Naive thymus-derived CD4-positive, alpha-beta T cell (primary cell): ENCODE measurements at regions of chr11 and their contacts with region 1.

Region 1: DNA sequence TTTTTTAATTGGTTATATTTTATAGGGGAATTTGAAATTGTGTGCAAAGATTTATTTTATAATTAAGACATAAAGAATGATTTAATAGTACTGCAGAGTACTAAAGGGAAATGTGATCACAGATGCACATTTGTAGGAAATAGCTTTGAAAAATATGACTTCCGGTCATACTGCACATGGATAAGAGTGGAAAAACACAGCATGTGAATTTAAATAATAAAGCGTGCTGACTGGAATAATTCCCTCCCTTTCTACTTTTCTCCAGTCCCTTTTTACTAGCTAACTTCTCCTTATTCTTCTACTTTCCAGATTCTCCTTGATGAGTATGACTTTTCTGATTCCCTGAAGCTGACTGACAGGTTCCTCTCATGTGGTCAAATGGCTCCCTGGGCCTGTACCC is 238.4 kb upstream of the CTSC start:
- DNase-seq: no peak
- ATAC-seq: no peak
- H3K4me3 ChIP-seq: no peak overlapping the region
- H3K4me3 Mint-ChIP-seq: no peak overlapping the region
- H3K27ac ChIP-seq: no peak overlapping the region
- H3K27ac Mint-ChIP-seq: no peak overlapping the region
- H3K4me1 ChIP-seq: no peaks in the 10 kb centered on the region
- H3K4me1 Mint-ChIP-seq: no peaks in the 10 kb centered on the region
- H3K27me3 ChIP-seq: no peaks in the 10 kb centered on the region
- H3K27me3 Mint-ChIP-seq: peaks cover 0 to 12% (median 7%) of the 10 kb centered on the region in 5 donors

Region 2: GRCh38 chr11:88103337-88104206 is 472.3 kb before region 1 on chr11:
- CTCF ChIA-PET with region 1: no interaction called
- POLR2A ChIA-PET with region 1: no interaction called
- intact Hi-C with region 1: no loop called
- DNase-seq: peak in 8 of 9 donors; percentile 9 to 46 (median 20)
- ATAC-seq: peak; percentile 78
- H3K4me3 ChIP-seq: no peak overlapping the region
- H3K4me3 Mint-ChIP-seq: no peak overlapping the region
- H3K27ac ChIP-seq: no peak overlapping the region
- H3K27ac Mint-ChIP-seq: no peak overlapping the region
- H3K4me1 ChIP-seq: no peaks in the 10 kb centered on the region
- H3K4me1 Mint-ChIP-seq: no peaks in the 10 kb centered on the region
- H3K27me3 ChIP-seq: peaks cover 0 to 5% of the 10 kb centered on the region in 2 donors
- H3K27me3 Mint-ChIP-seq: peaks cover 5 to 16% (median 8%) of the 10 kb centered on the region in 5 donors

Region 3: DNA sequence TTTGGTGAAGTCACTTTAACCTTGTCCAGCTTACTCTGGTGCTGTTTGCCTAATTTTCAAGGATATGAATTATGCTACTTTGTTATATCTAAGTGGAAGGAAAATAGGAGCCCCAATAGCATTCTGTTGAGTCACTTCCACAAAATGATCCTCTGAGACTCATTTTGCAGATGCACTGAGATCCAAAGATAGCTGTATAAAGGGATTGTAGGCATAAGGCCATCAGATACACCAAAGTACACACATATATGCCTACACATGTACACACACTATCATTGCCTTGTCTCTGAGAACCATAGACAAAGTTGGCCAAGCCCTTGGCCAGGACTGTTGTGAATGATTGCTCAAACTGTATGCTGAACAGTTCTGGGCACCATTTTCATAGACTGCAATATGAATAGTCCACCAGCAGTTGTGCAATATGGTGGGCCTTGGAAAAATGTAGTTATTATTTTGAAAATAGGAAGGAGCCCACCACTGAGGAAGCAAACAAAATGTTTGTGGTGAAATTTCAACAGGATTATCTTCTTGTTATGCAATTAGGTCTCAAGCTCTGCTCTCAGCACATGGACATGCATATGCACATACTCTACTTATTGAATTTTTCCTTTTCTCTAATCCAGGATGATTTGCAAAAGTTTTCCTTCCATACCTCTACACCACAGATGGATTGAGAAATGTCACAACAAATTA is 52.4 kb before region 1 on chr11:
- CTCF ChIA-PET with region 1: no interaction called
- POLR2A ChIA-PET with region 1: no interaction called
- intact Hi-C with region 1: no loop called
- DNase-seq: no peak
- ATAC-seq: no peak
- H3K4me3 ChIP-seq: no peak overlapping the region
- H3K4me3 Mint-ChIP-seq: no peak overlapping the region
- H3K27ac ChIP-seq: no peak overlapping the region
- H3K27ac Mint-ChIP-seq: no peak overlapping the region
- H3K4me1 ChIP-seq: no peaks in the 10 kb centered on the region
- H3K4me1 Mint-ChIP-seq: no peaks in the 10 kb centered on the region
- H3K27me3 ChIP-seq: no peaks in the 10 kb centered on the region
- H3K27me3 Mint-ChIP-seq: peaks cover 0 to 20% (median 0%) of the 10 kb centered on the region in 5 donors

Region 4: GRCh38 chr11:88590361-88590760 is 14.4 kb after region 1 on chr11:
- CTCF ChIA-PET with region 1: no interaction called
- POLR2A ChIA-PET with region 1: no interaction called
- intact Hi-C with region 1: loop called in 1 of 2 experiments (anchors 1 kb)
- DNase-seq: no peak
- ATAC-seq: no peak
- H3K4me3 ChIP-seq: no peak overlapping the region
- H3K4me3 Mint-ChIP-seq: no peak overlapping the region
- H3K27ac ChIP-seq: no peak overlapping the region
- H3K27ac Mint-ChIP-seq: no peak overlapping the region
- H3K4me1 ChIP-seq: no peaks in the 10 kb centered on the region
- H3K4me1 Mint-ChIP-seq: peaks cover 0 to 20% (median 13%) of the 10 kb centered on the region in 7 donors
- H3K27me3 ChIP-seq: no peaks in the 10 kb centered on the region
- H3K27me3 Mint-ChIP-seq: peaks cover 0 to 4% (median 0%) of the 10 kb centered on the region in 5 donors

Region 5: GRCh38 chr11:88596786-88597185 is 20.9 kb after region 1 on chr11:
- CTCF ChIA-PET with region 1: no interaction called
- POLR2A ChIA-PET with region 1: no interaction called
- intact Hi-C with region 1: loop called in 1 of 2 experiments (anchors 2 kb)
- DNase-seq: no peak
- ATAC-seq: no peak
- H3K4me3 ChIP-seq: no peak overlapping the region
- H3K4me3 Mint-ChIP-seq: no peak overlapping the region
- H3K27ac ChIP-seq: no peak overlapping the region
- H3K27ac Mint-ChIP-seq: no peak overlapping the region
- H3K4me1 ChIP-seq: no peaks in the 10 kb centered on the region
- H3K4me1 Mint-ChIP-seq: peaks cover 0 to 18% (median 15%) of the 10 kb centered on the region in 7 donors
- H3K27me3 ChIP-seq: no peaks in the 10 kb centered on the region
- H3K27me3 Mint-ChIP-seq: peaks cover 0 to 5% (median 0%) of the 10 kb centered on the region in 5 donors